ENCODE measurements at regions of chr2 and their contacts with region 1.

Region 1: GRCh38 chr2:240021488-240022104 is 3.5 kb downstream of the NDUFA10 start:
- DNase-seq: peak; percentile 66
- H3K4me3 ChIP-seq: no peak overlapping the region
- H3K27ac ChIP-seq: no peak overlapping the region
- H3K4me1 ChIP-seq: peaks cover 19% of the 10 kb centered on the region
- CTCF ChIP-seq: peak; percentile 83

Region 2: DNA sequence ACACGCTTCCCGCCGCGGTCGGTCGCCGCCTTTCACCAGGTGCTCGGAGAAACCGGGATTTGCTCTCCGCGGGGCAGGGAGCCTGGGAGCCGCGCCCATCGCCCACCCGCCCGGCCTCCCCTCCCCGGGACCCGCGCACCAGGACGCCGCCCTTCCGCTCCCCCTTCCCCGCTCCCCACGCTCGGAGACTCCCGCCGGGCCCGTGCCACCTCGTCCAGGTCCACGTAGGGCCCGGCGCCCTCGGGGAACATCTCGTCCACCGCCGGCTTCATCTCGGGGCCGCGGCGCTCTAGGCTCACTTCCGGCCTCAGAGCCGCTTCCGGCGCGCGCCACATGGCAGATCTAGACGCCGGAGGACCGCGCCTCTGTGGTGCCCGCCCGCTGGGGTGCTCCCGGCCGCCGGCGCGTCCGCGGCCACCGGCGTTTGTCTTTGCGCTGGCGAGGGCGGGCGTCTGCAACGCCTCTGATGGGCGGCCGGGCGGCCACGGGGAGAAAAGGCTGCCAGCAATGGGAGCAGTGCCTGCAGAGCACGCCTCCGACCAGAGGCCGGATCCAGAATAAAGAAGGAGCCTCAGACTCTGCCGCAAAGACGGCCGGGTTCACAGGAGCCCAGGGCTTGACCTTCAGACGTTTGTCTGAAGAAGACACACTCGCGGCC is 114.5 kb after region 1 on chr2 and contains the start of gene COPS9:
- CTCF ChIA-PET with region 1: no interaction called
- POLR2A ChIA-PET with region 1: interaction called, 3 read pairs
- intact Hi-C with region 1: loop called (anchors 2 kb)
- DNase-seq: peak; percentile 90
- H3K4me3 ChIP-seq: peak within 1 kb of the TSS; percentile 89
- H3K27ac ChIP-seq: no peak within 1 kb of the TSS
- H3K4me1 ChIP-seq: peaks cover 17% of the 10 kb centered on the region
- CTCF ChIP-seq: no peak
- total RNA-seq, gene COPS9: 158 and 159 TPM in 2 replicates

Measured in OCI-LY7 (cell line).